B cell (primary cell): ENCODE measurements at regions of chr20 and their contacts with region 1.

Region 1: DNA sequence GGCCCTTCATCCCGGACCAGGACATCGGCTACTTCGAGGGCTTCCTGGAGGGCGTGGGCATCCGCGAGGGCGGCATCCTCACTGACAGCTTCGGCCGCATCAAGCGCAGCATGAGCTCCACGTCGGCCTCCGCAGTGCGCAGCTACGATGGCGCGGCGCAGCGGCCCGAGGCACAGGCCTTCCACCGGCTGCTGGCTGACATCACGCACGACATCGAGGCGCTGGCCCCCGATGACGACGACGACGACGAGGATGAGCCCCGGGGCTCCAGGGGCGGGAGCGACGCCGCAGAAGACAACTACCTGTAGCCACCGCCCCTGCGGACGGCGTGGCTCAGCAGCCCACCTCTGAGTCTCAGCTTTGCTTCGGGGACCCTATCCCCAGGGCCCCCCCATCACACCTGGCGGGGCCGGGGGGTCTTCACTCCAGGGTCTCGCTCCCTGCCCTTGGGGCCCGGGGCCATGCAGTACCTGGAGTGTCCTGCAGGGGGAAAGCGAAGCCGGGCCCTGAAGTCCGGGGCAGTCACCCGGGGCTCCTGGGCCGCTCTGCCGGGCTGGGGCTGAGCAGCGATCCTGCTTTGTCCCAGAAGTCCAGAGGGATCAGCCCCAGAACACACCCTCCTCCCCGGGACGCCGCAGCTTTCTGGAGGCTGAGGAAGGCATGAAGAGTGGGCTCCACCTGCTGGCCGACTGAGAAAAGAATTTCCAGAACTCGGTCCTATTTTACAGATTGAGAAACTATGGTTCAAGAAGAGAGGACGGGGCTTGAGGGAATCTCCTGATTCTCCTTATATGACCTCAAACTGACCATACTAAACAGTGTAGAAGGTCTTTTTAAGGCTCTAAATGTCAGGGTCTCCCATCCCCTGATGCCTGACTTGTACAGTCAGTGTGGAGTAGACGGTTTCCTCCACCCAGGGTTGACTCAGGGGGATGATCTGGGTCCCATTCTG is 20.8 kb upstream of the HCK start:
- DNase-seq: peak; percentile 78
- ATAC-seq: peak; percentile 75
- H3K4me3 ChIP-seq: peak overlapping the region in 4 of 5 experiments; percentile 18 to 55 (median 40)
- H3K4me3 Mint-ChIP-seq: peak overlapping the region; percentile 65
- H3K27ac ChIP-seq: no peak overlapping the region
- H3K27ac Mint-ChIP-seq: no peak overlapping the region
- H3K4me1 ChIP-seq: peaks cover 7 to 25% of the 10 kb centered on the region in 2 donors
- H3K4me1 Mint-ChIP-seq: peaks cover 22% of the 10 kb centered on the region
- H3K27me3 ChIP-seq: peaks cover 0 to 21% (median 9%) of the 10 kb centered on the region in 4 experiments
- H3K27me3 Mint-ChIP-seq: peaks cover 35% of the 10 kb centered on the region
- CTCF ChIP-seq: peak; percentile 100

Region 2: GRCh38 chr20:31684153-31685015 is 346.9 kb before region 1 on chr20:
- CTCF ChIA-PET with region 1: no interaction called
- POLR2A ChIA-PET with region 1: no interaction called
- intact Hi-C with region 1: no loop called
- DNase-seq: peak; percentile 56
- ATAC-seq: peak; percentile 76
- H3K4me3 ChIP-seq: peak overlapping the region in 2 of 5 experiments; percentile 4 to 56
- H3K4me3 Mint-ChIP-seq: peak overlapping the region; percentile 65
- H3K27ac ChIP-seq: peak overlapping the region; percentile 60 to 82
- H3K27ac Mint-ChIP-seq: peak overlapping the region; percentile 90
- H3K4me1 ChIP-seq: peaks cover 24 to 31% of the 10 kb centered on the region in 2 donors
- H3K4me1 Mint-ChIP-seq: peaks cover 40% of the 10 kb centered on the region
- H3K27me3 ChIP-seq: no peaks in the 10 kb centered on the region
- H3K27me3 Mint-ChIP-seq: no peaks in the 10 kb centered on the region
- CTCF ChIP-seq: no peak

Region 3: GRCh38 chr20:31822421-31823330 is 208.6 kb before region 1 on chr20:
- CTCF ChIA-PET with region 1: interaction called, 54 read pairs
- POLR2A ChIA-PET with region 1: no interaction called
- intact Hi-C with region 1: loop called (anchors 1 kb)
- DNase-seq: peak; percentile 82
- ATAC-seq: peak; percentile 93
- H3K4me3 ChIP-seq: no peak overlapping the region
- H3K4me3 Mint-ChIP-seq: peak overlapping the region; percentile 27
- H3K27ac ChIP-seq: no peak overlapping the region
- H3K27ac Mint-ChIP-seq: no peak overlapping the region
- H3K4me1 ChIP-seq: peaks cover 6 to 8% of the 10 kb centered on the region in 2 donors
- H3K4me1 Mint-ChIP-seq: peaks cover 8% of the 10 kb centered on the region
- H3K27me3 ChIP-seq: peaks cover 0 to 9% (median 0%) of the 10 kb centered on the region in 4 experiments
- H3K27me3 Mint-ChIP-seq: peaks cover 8% of the 10 kb centered on the region
- CTCF ChIP-seq: peak; percentile 99

Region 4: GRCh38 chr20:31861346-31862156 is 169.7 kb before region 1 on chr20:
- CTCF ChIA-PET with region 1: interaction called, 139 read pairs
- POLR2A ChIA-PET with region 1: no interaction called
- intact Hi-C with region 1: no loop called
- DNase-seq: peak; percentile 81
- ATAC-seq: peak; percentile 83
- H3K4me3 ChIP-seq: peak overlapping the region in 4 of 5 experiments; percentile 42 to 61 (median 54)
- H3K4me3 Mint-ChIP-seq: peak overlapping the region; percentile 75
- H3K27ac ChIP-seq: no peak overlapping the region
- H3K27ac Mint-ChIP-seq: peak overlapping the region; percentile 53
- H3K4me1 ChIP-seq: peaks cover 19 to 26% of the 10 kb centered on the region in 2 donors
- H3K4me1 Mint-ChIP-seq: peaks cover 29% of the 10 kb centered on the region
- H3K27me3 ChIP-seq: peaks cover 0 to 18% (median 10%) of the 10 kb centered on the region in 4 experiments
- H3K27me3 Mint-ChIP-seq: peaks cover 5% of the 10 kb centered on the region
- CTCF ChIP-seq: no peak

Region 5: GRCh38 chr20:31979713-31980426 is 51.4 kb before region 1 on chr20:
- CTCF ChIA-PET with region 1: no interaction called
- POLR2A ChIA-PET with region 1: no interaction called
- intact Hi-C with region 1: no loop called
- DNase-seq: no peak
- ATAC-seq: no peak
- H3K4me3 ChIP-seq: no peak overlapping the region
- H3K4me3 Mint-ChIP-seq: no peak overlapping the region
- H3K27ac ChIP-seq: no peak overlapping the region
- H3K27ac Mint-ChIP-seq: no peak overlapping the region
- H3K4me1 ChIP-seq: no peaks in the 10 kb centered on the region
- H3K4me1 Mint-ChIP-seq: no peaks in the 10 kb centered on the region
- H3K27me3 ChIP-seq: peaks cover 0 to 5% (median 0%) of the 10 kb centered on the region in 4 experiments
- H3K27me3 Mint-ChIP-seq: peaks cover 41% of the 10 kb centered on the region
- CTCF ChIP-seq: no peak

Region 6: GRCh38 chr20:32018269-32019074 is 12.8 kb before region 1 on chr20:
- CTCF ChIA-PET with region 1: interaction called, 26 read pairs
- POLR2A ChIA-PET with region 1: no interaction called
- intact Hi-C with region 1: no loop called
- DNase-seq: peak; percentile 60
- ATAC-seq: peak; percentile 61
- H3K4me3 ChIP-seq: peak overlapping the region in 4 of 5 experiments; percentile 41 to 69 (median 56)
- H3K4me3 Mint-ChIP-seq: peak overlapping the region; percentile 84
- H3K27ac ChIP-seq: no peak overlapping the region
- H3K27ac Mint-ChIP-seq: no peak overlapping the region
- H3K4me1 ChIP-seq: peaks cover 15 to 17% of the 10 kb centered on the region in 2 donors
- H3K4me1 Mint-ChIP-seq: peaks cover 22% of the 10 kb centered on the region
- H3K27me3 ChIP-seq: peaks cover 0 to 64% (median 30%) of the 10 kb centered on the region in 4 experiments
- H3K27me3 Mint-ChIP-seq: peaks cover 75% of the 10 kb centered on the region
- CTCF ChIP-seq: no peak

Region 7: DNA sequence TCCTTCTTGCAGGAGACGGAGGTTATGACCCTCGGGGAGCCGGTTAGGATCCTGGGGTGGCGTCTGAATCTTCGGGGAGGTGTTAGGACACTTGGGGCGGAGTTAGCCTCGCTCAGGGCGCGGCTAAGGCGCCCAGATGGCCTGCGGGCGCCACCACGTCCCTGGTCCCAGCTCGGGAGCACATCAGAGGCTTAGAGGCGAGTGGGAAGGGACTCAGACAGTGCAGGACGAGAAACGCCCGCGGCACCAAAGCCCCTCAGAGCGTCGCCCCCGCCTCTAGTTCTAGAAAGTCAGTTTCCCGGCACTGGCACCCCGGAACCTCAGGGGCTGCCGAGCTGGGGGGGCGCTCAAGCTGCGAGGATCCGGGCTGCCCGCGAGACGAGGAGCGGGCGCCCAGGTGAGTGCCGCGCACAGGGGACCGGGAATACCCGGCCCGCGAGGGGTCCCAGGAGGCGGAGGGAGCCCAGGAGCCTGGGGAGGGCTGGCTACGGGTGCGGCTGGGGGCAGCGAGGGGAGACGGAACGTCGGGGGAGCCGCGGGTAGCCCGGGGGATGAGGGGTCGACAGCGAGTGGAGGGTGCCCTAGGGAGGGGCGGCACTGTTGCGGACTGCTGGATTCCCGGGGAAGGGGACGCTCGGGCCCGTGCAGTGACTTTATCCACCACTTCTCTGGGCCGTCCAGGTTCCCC is 21.0 kb after region 1 on chr20 and contains the start of gene HCK:
- CTCF ChIA-PET with region 1: interaction called, 27 read pairs
- POLR2A ChIA-PET with region 1: interaction called, 3 read pairs
- intact Hi-C with region 1: no loop called
- DNase-seq: peak; percentile 54
- ATAC-seq: peak; percentile 44
- H3K4me3 ChIP-seq: peak within 1 kb of the TSS; percentile 35 to 93 (median 77)
- H3K4me3 Mint-ChIP-seq: peak within 1 kb of the TSS; percentile 90
- H3K27ac ChIP-seq: peak within 1 kb of the TSS; percentile 76 to 82
- H3K27ac Mint-ChIP-seq: peak within 1 kb of the TSS; percentile 90
- H3K4me1 ChIP-seq: peaks cover 33 to 55% of the 10 kb centered on the region in 2 donors
- H3K4me1 Mint-ChIP-seq: peaks cover 45% of the 10 kb centered on the region
- H3K27me3 ChIP-seq: peaks cover 0 to 3% (median 0%) of the 10 kb centered on the region in 4 experiments
- H3K27me3 Mint-ChIP-seq: no peaks in the 10 kb centered on the region
- CTCF ChIP-seq: no peak
- total RNA-seq, gene HCK: 48.1 and 48.6 TPM in 2 replicates

Region 8: GRCh38 chr20:32079655-32080109 is 48.4 kb after region 1 on chr20:
- CTCF ChIA-PET with region 1: interaction called, 389 read pairs
- POLR2A ChIA-PET with region 1: no interaction called
- intact Hi-C with region 1: no loop called
- DNase-seq: no peak
- ATAC-seq: no peak
- H3K4me3 ChIP-seq: no peak overlapping the region
- H3K4me3 Mint-ChIP-seq: no peak overlapping the region
- H3K27ac ChIP-seq: no peak overlapping the region
- H3K27ac Mint-ChIP-seq: no peak overlapping the region
- H3K4me1 ChIP-seq: no peaks in the 10 kb centered on the region
- H3K4me1 Mint-ChIP-seq: peaks cover 3% of the 10 kb centered on the region
- H3K27me3 ChIP-seq: no peaks in the 10 kb centered on the region
- H3K27me3 Mint-ChIP-seq: no peaks in the 10 kb centered on the region
- CTCF ChIP-seq: no peak

Region 9: GRCh38 chr20:32109392-32110172 is 78.3 kb after region 1 on chr20 and contains the start of gene TM9SF4:
- CTCF ChIA-PET with region 1: interaction called, 18 read pairs
- POLR2A ChIA-PET with region 1: no interaction called
- intact Hi-C with region 1: no loop called
- DNase-seq: peak; percentile 97
- ATAC-seq: peak; percentile 90
- H3K4me3 ChIP-seq: peak within 1 kb of the TSS; percentile 87 to 96 (median 95)
- H3K4me3 Mint-ChIP-seq: peak within 1 kb of the TSS; percentile 99
- H3K27ac ChIP-seq: peak within 1 kb of the TSS; percentile 99
- H3K27ac Mint-ChIP-seq: peak within 1 kb of the TSS; percentile 99
- H3K4me1 ChIP-seq: peaks cover 8 to 9% of the 10 kb centered on the region in 2 donors
- H3K4me1 Mint-ChIP-seq: peaks cover 36% of the 10 kb centered on the region
- H3K27me3 ChIP-seq: no peaks in the 10 kb centered on the region
- H3K27me3 Mint-ChIP-seq: no peaks in the 10 kb centered on the region
- CTCF ChIP-seq: no peak
- total RNA-seq, gene TM9SF4: 50.4 and 53.8 TPM in 2 replicates

Region 10: GRCh38 chr20:32240220-32240619 is 208.9 kb after region 1 on chr20:
- CTCF ChIA-PET with region 1: no interaction called
- POLR2A ChIA-PET with region 1: no interaction called
- intact Hi-C with region 1: no loop called
- DNase-seq: no peak
- ATAC-seq: no peak
- H3K4me3 ChIP-seq: no peak overlapping the region
- H3K4me3 Mint-ChIP-seq: no peak overlapping the region
- H3K27ac ChIP-seq: no peak overlapping the region
- H3K27ac Mint-ChIP-seq: no peak overlapping the region
- H3K4me1 ChIP-seq: peaks cover 7 to 8% of the 10 kb centered on the region in 2 donors
- H3K4me1 Mint-ChIP-seq: peaks cover 12% of the 10 kb centered on the region
- H3K27me3 ChIP-seq: no peaks in the 10 kb centered on the region
- H3K27me3 Mint-ChIP-seq: no peaks in the 10 kb centered on the region
- CTCF ChIP-seq: no peak

Region 11: GRCh38 chr20:32888636-32889035 is 857.4 kb after region 1 on chr20:
- CTCF ChIA-PET with region 1: no interaction called
- POLR2A ChIA-PET with region 1: no interaction called
- intact Hi-C with region 1: no loop called
- DNase-seq: no peak
- ATAC-seq: no peak
- H3K4me3 ChIP-seq: no peak overlapping the region
- H3K4me3 Mint-ChIP-seq: no peak overlapping the region
- H3K27ac ChIP-seq: no peak overlapping the region
- H3K27ac Mint-ChIP-seq: no peak overlapping the region
- H3K4me1 ChIP-seq: no peaks in the 10 kb centered on the region
- H3K4me1 Mint-ChIP-seq: no peaks in the 10 kb centered on the region
- H3K27me3 ChIP-seq: no peaks in the 10 kb centered on the region
- H3K27me3 Mint-ChIP-seq: no peaks in the 10 kb centered on the region
- CTCF ChIP-seq: no peak